Dorsolateral prefrontal cortex (tissue), 120 donors: ENCODE measurements at regions of chr7 and their contacts with region 1.

Region 1: DNA sequence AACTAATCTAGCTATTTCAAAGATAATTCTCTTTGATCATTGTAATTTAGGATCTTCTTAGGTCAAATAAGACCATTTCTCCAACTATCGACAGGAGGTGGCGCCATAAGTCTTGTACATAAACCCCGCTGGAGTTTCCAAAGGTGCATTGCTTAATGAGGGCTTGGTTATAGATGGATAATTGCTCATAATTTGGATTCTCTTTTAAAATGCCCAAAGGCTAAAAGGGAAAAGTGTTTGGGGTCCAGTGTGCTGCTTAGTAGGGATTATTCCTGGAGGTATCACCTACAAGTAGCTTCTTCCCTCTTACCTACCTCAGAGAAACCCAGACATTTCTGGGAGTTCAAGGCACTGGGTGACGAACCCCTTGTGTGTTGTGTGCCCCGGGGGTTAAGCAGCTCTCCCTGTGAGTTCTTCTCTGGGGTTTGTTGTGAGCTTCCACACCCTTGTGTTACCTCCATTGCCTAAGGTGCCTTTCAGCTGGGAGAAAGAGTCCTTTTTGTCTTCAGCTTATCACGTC is 75.2 kb downstream of the PAXIP1 start:
- DNase-seq: peak in 6 of 10 donors; percentile 70 to 92 (median 78)
- H3K4me3 ChIP-seq: peak overlapping the region; percentile 20 to 71 (median 58)
- H3K27ac ChIP-seq: peak overlapping the region in 47 of 59 donors; percentile 1 to 91 (median 67)
- H3K27me3 ChIP-seq: no peaks in the 10 kb centered on the region
- CTCF ChIP-seq: peak; percentile 54 to 88 (median 74)

Region 2: DNA sequence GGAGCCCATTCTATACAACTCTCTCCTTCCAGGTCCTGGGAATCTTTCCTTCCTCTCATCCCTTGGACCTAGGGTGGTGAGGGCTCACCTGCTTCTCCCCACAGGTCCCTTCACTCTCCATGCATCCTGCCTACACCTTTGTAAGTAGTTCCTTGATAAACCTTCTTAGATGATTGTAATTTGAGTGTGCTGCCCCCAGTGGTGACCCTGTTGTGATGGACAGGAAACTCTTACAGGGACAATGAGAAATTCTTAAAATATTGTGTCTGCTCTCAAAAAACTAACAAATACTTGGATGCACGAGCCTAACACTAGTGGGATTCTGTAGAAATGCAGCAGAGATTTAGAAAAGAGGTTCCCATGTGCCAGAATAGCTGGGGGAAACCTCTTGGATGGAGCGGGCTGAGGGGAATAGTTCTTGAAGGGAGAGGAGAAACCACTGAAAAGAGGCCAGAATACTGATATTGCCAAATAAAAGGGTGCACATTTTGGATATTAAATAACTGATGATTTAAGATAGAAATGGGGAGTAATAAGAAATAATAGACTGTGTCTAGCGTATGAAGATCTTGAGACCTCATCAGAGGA is 82.0 kb after region 1 on chr7:
- intact Hi-C with region 1: loop called (anchors 2 to 5 kb)
- DNase-seq: no peak
- H3K4me3 ChIP-seq: no peak overlapping the region
- H3K27ac ChIP-seq: no peak overlapping the region
- H3K27me3 ChIP-seq: no peaks in the 10 kb centered on the region
- CTCF ChIP-seq: peak in 28 of 56 donors; percentile 0 to 45 (median 22)

Region 3: DNA sequence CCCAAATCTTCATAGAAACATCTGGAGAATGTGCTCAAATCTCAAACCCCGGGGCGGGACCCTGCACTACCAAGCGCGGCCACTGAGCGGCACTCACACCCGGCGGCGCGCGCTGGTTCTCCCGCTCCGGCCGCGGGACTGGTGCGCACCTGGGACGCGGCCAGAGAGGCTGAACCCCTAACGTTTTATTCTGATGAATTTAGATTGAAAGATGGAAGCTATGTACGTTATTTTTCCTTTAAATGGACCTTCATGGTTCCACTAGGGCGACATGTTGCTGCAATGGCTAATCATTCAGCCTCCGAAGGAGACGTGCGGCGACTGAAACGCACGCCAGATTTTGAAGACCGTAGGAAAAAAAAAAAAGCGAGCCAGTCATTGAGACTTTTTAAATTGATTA is 263.0 kb after region 1 on chr7:
- intact Hi-C with region 1: loop called in 1 of 2 experiments (anchors 5 kb)
- DNase-seq: peak in 4 of 10 donors; percentile 54 to 73 (median 65)
- H3K4me3 ChIP-seq: peak overlapping the region in 36 of 59 donors; percentile 8 to 63 (median 41)
- H3K27ac ChIP-seq: no peak overlapping the region
- H3K27me3 ChIP-seq: peaks cover 0 to 10% (median 0%) of the 10 kb centered on the region in 45 donors
- CTCF ChIP-seq: peak; percentile 52 to 89 (median 82)

Region 4: GRCh38 chr7:155344600-155345433 is 417.1 kb after region 1 on chr7:
- intact Hi-C with region 1: loop called (anchors 2 to 5 kb)
- DNase-seq: peak; percentile 60 to 90 (median 70)
- H3K4me3 ChIP-seq: peak overlapping the region in 57 of 59 donors; percentile 26 to 66 (median 49)
- H3K27ac ChIP-seq: no peak overlapping the region
- H3K27me3 ChIP-seq: peaks cover 0 to 18% (median 10%) of the 10 kb centered on the region in 45 donors
- CTCF ChIP-seq: peak; percentile 45 to 99 (median 85)

Region 5: DNA sequence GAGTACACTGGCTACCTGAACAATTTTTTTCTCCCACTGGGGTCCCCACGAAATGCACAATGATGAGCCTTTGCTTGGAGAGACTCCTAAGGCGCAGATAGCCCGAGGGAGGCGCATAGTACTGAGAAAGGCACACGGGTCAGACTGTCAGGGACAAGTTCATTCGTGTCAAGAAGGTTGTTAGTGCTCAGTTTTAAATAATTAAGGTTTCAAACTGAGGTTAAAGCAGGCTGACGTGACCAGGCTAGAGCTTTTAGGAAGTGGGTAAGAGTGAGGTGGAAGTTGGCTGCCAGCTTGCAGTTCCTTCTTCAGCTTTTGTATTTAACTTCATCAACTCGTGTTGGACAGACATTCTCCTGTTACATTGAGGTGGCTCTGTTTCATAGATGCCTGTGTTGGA is 748.4 kb after region 1 on chr7:
- intact Hi-C with region 1: no loop called
- DNase-seq: no peak
- H3K4me3 ChIP-seq: no peak overlapping the region
- H3K27ac ChIP-seq: no peak overlapping the region
- H3K27me3 ChIP-seq: no peaks in the 10 kb centered on the region
- CTCF ChIP-seq: no peak

Region 6: DNA sequence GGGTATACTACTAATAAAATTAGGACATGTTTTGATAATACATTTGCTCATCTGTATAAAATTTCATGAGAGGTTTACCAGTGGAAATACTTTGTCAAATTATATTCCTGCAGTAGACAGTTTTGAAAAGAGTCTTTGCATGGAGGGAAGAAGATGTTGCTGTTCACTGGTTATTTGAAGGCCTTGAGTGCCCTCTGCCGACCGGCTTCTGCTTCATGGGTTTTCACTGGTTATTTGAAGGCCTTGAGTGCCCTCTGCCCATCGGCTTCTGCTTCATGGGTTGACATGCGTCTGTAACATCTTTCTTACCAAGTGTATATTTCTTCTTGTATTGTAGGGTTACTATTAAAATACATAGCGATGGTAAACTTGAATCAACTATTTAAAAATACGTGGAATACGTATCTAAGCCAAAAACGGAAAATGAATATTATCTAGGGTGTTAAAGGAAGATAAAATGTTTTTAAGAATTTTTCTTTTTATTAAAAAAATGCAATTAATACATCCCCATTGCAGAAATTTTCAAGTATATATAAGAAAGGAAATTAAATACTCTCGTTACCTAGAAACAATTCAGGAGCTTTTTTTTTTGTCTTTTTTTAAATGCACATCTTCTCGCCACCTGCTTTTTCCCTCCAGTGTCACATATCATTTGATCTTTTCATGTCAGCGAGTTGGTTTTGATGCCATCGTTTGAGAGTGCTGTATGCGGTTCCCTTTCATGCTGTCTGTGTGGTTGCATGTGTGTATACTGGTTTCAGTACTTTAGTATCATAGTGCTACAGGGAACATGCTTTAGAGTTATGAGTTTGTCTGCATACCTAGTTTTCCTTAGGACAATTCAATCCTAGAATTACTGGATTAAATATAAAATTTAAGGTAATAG is 811.2 kb after region 1 on chr7:
- intact Hi-C with region 1: loop called in 1 of 2 experiments (anchors 10 kb)
- DNase-seq: peak; percentile 77 to 94 (median 83)
- H3K4me3 ChIP-seq: no peak overlapping the region
- H3K27ac ChIP-seq: no peak overlapping the region
- H3K27me3 ChIP-seq: no peaks in the 10 kb centered on the region
- CTCF ChIP-seq: peak; percentile 33 to 97 (median 81)